Activated CD8-positive, alpha-beta memory T cell treated with anti-CD3 and anti-CD28 coated beads, Interleukin-2, amount 10 ng/mL, durations not matched to agents 7 days and 5 days (primary cell): ENCODE measurements at regions of chr6 and their contacts with region 1.

Region 1: DNA sequence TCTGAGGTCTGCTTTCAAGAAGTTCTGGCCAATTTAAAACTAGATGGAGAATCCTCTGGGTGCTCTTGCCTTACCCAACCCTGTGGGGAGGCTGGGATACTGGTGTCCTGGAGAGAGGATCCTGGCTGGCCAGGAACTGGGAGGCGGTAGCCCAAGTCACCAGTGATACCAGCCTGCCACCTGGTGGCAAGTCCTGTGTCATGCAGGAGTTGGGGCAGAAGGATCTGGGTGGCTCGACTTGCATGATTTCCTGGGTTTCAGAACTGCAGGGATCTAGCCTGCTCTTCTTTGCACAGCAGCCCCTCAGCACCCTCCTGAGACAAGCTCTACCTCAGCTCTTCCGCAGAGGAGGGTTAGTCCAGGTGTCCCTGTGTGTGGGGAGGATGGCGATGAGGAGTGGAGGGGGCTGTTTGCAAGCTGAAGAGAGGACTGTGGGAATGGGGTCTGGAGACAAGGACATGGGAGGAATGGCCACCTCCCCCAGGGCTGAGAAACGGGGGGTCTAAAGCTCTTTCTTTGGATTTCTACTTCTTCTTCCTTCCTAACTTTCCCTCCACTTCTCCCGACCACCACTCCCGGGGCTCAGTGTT is 4.2 kb downstream of the KCNK17 start:
- DNase-seq: peak; percentile 70
- ATAC-seq: peak; percentile 72
- H3K4me3 Mint-ChIP-seq: no peak overlapping the region
- H3K27ac Mint-ChIP-seq: no peak overlapping the region
- H3K4me1 Mint-ChIP-seq: peaks cover 5% of the 10 kb centered on the region
- H3K27me3 Mint-ChIP-seq: peaks cover 46% of the 10 kb centered on the region

Region 2: DNA sequence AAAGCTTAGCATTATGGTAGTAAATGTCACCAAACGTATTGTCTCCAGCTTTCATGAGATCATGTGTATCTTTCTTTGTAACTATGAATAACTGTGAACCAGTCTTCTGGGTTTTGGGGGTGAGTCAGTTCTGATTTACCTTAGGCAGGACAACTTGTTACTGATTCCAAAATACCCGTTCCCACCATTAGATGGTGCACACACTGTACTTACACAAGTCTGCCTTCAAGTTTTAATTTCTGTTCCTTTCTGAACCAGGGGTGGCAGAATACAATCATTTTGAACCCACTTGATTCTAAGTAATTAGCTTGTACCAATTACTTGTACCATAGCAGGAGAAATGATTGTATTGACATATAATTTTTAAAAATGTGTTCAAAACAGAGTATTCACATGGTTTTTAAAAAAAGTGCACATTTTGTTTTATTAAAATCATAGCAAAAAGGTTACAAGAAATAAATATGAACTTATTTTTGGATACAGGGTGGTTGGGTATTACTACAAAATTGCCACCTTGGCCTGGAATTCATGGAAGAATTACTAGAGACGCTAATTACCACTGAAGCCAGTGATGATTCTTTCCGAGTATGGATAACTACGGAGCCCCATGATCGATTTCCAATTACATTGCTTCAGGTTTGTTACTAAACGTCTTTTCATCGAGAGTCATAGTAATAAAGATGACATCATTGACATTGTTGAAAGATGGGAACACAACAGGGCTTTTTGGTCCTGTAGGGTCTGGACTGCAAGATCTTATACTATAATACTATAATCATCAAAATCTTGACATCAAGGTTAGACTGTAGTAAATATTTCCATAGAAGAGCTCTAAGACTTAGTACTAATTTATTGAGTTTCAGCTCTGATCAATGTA is 336.6 kb before region 1 on chr6:
- CTCF ChIA-PET with region 1: interaction called, 10 read pairs
- DNase-seq: peak; percentile 46
- ATAC-seq: peak; percentile 83
- H3K4me3 Mint-ChIP-seq: no peak overlapping the region
- H3K27ac Mint-ChIP-seq: no peak overlapping the region
- H3K4me1 Mint-ChIP-seq: peaks cover 1% of the 10 kb centered on the region
- H3K27me3 Mint-ChIP-seq: peaks cover 64% of the 10 kb centered on the region

Region 3: GRCh38 chr6:38997128-38997761 is 312.8 kb before region 1 on chr6:
- CTCF ChIA-PET with region 1: interaction called, 19 read pairs
- DNase-seq: peak; percentile 48
- ATAC-seq: no peak
- H3K4me3 Mint-ChIP-seq: no peak overlapping the region
- H3K27ac Mint-ChIP-seq: no peak overlapping the region
- H3K4me1 Mint-ChIP-seq: no peaks in the 10 kb centered on the region
- H3K27me3 Mint-ChIP-seq: peaks cover 60% of the 10 kb centered on the region

Region 4: DNA sequence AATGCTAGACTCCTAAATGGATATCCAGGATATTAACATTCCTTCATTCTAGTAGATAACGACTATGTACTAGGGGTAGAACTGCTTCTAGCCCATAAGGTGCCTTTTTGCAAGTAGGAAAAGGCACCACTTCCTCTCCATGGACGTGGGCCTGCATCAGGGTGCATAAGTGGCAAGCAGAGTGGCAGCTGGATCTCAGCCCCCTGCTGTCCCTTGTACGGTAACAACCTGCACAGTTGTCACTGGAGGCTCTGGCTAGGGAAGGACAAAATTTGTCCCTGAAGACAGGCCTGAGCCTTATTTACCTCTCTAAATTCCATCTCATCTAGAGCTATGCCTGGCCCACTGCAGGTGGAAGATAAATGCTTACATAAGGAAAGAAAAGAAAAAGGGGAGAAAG is 152.5 kb before region 1 on chr6:
- CTCF ChIA-PET with region 1: interaction called, 25 read pairs
- DNase-seq: no peak
- ATAC-seq: no peak
- H3K4me3 Mint-ChIP-seq: no peak overlapping the region
- H3K27ac Mint-ChIP-seq: no peak overlapping the region
- H3K4me1 Mint-ChIP-seq: peaks cover 12% of the 10 kb centered on the region
- H3K27me3 Mint-ChIP-seq: no peaks in the 10 kb centered on the region

Region 5: DNA sequence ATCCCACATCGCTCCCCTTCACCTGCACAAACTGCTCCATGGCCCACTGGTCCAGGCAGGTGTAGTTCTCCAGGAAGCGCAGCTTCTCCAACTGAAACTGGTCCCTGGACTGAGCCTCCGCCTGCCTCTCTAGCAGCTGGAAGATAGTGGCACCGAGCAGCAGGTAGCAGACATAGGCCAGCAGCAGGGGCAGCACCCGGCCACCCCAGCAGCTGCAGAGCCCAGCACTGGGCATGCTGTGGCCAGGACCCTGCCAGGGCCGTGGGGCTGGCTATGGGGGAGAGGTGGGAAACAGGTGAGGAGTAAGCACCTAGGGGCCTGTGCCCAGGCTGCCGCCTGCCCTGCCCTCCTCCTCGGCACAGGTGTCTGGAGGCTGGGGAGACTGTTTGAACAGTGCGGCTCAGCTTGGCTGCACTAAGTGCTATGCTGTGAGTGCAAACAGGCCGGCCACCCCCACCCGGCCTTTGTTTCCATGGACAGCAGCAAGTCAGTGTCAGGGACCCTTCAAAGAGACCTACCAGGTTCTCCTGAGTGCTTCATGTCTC is 12.3 kb after region 1 on chr6 and contains the start of gene KCNK16:
- CTCF ChIA-PET with region 1: no interaction called
- DNase-seq: no peak
- ATAC-seq: no peak
- H3K4me3 Mint-ChIP-seq: no peak within 1 kb of the TSS
- H3K27ac Mint-ChIP-seq: no peak within 1 kb of the TSS
- H3K4me1 Mint-ChIP-seq: no peaks in the 10 kb centered on the region
- H3K27me3 Mint-ChIP-seq: peaks cover 36% of the 10 kb centered on the region
- total RNA-seq, gene KCNK16: not detected

Region 6: GRCh38 chr6:39791850-39792539 is 482.0 kb after region 1 on chr6 and contains the start of gene DAAM2:
- CTCF ChIA-PET with region 1: no interaction called
- DNase-seq: no peak
- ATAC-seq: no peak
- H3K4me3 Mint-ChIP-seq: no peak within 1 kb of the TSS
- H3K27ac Mint-ChIP-seq: no peak within 1 kb of the TSS
- H3K4me1 Mint-ChIP-seq: no peaks in the 10 kb centered on the region
- H3K27me3 Mint-ChIP-seq: peaks cover 48% of the 10 kb centered on the region
- total RNA-seq, gene DAAM2: not detected